Heart left ventricle (tissue), 16 donors: ENCODE measurements at regions of chr1 and their contacts with region 1.

Region 1: DNA sequence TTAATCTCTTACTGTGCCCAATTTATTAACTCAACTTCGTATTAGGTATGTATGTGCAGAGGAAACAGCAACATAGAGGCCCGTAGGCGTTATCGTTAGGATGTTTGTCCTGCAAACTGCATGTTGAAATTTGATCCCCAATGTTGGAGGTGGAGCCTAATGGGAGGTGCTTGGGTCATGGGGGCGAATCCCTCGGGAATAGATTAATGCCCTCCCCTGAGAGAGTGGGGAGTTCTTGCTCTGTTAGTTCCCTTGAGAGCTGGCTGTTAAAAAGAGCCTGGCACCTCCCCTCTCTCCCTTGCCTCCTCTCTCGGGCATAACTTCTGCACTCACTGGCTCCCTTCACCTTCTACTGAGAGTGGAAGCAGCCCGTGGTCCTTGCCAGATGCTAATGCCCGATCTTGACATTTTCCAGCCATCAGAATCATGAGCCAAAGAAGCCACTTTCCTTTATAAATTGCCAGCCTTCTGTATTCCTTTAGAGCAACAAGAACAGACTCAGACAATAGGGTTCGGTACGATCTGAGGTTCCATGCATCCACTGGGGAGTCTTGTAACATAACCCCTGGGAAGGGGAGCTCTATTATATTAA is 149.0 kb upstream of the RAB4A start:
- DNase-seq: no peak
- ATAC-seq: no peak
- H3K4me3 ChIP-seq: no peak overlapping the region
- H3K27ac ChIP-seq: peak overlapping the region in 1 of 12 donors; percentile 53
- H3K4me1 ChIP-seq: peaks cover 0 to 11% (median 0%) of the 10 kb centered on the region in 12 donors
- H3K27me3 ChIP-seq: peaks cover 0 to 9% (median 0%) of the 10 kb centered on the region in 9 donors
- CTCF ChIP-seq: no peak
- POLR2A ChIP-seq: no peak

Region 2: DNA sequence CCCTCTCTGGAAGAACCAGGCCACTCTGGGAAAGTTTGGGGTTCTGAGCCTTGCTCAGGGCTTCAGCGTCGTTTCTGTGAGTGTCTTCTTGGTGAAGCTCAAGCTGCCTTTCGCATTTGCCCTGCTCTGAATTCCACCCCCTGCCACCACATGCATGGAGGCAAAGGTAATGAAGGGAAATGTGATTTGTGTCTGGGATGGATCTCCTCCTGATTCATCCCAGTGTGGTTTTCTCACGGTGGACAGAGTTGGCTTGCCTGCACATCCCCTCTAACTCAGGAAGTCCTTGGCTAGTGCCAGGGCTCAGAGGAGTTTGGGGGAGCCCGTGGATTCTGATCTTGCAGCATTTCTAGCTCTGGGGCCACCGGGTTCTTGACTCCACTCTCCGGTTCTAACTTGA is 24.6 kb before region 1 on chr1:
- intact Hi-C with region 1: loop called in 1 of 10 experiments (anchors 2 kb)
- DNase-seq: no peak
- ATAC-seq: no peak
- H3K4me3 ChIP-seq: no peak overlapping the region
- H3K27ac ChIP-seq: no peak overlapping the region
- H3K4me1 ChIP-seq: no peaks in the 10 kb centered on the region
- H3K27me3 ChIP-seq: peaks cover 0 to 4% (median 0%) of the 10 kb centered on the region in 9 donors
- CTCF ChIP-seq: no peak
- POLR2A ChIP-seq: no peak